Psoas muscle (tissue), 8 donors: ENCODE measurements at regions of chr18 and their contacts with region 1.

Region 1: GRCh38 chr18:24878289-24878688 is 417.9 kb downstream of the HRH4 start:
- DNase-seq: no peak
- ATAC-seq: peak in 3 of 4 donors; percentile 62 to 80 (median 68)
- H3K4me3 ChIP-seq: no peak overlapping the region
- H3K27ac ChIP-seq: no peak overlapping the region
- H3K4me1 ChIP-seq: no peaks in the 10 kb centered on the region
- H3K27me3 ChIP-seq: no peaks in the 10 kb centered on the region
- CTCF ChIP-seq: peak; percentile 72

Region 2: GRCh38 chr18:25062720-25063119 is 184.4 kb after region 1 on chr18:
- intact Hi-C with region 1: loop called (anchors 5 to 10 kb)
- DNase-seq: no peak
- ATAC-seq: peak in 1 of 4 donors; percentile 58
- H3K4me3 ChIP-seq: no peak overlapping the region
- H3K27ac ChIP-seq: no peak overlapping the region
- H3K4me1 ChIP-seq: no peaks in the 10 kb centered on the region
- H3K27me3 ChIP-seq: no peaks in the 10 kb centered on the region
- CTCF ChIP-seq: no peak

Region 3: GRCh38 chr18:25669741-25670140 is 791.5 kb after region 1 on chr18:
- intact Hi-C with region 1: loop called (anchors 2 to 10 kb)
- DNase-seq: no peak
- ATAC-seq: no peak
- H3K4me3 ChIP-seq: no peak overlapping the region
- H3K27ac ChIP-seq: no peak overlapping the region
- H3K4me1 ChIP-seq: no peaks in the 10 kb centered on the region
- H3K27me3 ChIP-seq: no peaks in the 10 kb centered on the region
- CTCF ChIP-seq: peak; percentile 18

Region 4: GRCh38 chr18:25832001-25832604 is 953.8 kb after region 1 on chr18:
- intact Hi-C with region 1: loop called (anchors 1 to 5 kb)
- DNase-seq: peak; percentile 61 to 71
- ATAC-seq: peak; percentile 86 to 93 (median 87)
- H3K4me3 ChIP-seq: no peak overlapping the region
- H3K27ac ChIP-seq: no peak overlapping the region
- H3K4me1 ChIP-seq: no peaks in the 10 kb centered on the region
- H3K27me3 ChIP-seq: no peaks in the 10 kb centered on the region
- CTCF ChIP-seq: peak; percentile 75

Region 5: GRCh38 chr18:25896178-25896780 is 1018.0 kb after region 1 on chr18:
- intact Hi-C with region 1: loop called (anchors 5 kb)
- DNase-seq: no peak
- ATAC-seq: peak; percentile 57 to 78 (median 62)
- H3K4me3 ChIP-seq: no peak overlapping the region
- H3K27ac ChIP-seq: no peak overlapping the region
- H3K4me1 ChIP-seq: no peaks in the 10 kb centered on the region
- H3K27me3 ChIP-seq: no peaks in the 10 kb centered on the region
- CTCF ChIP-seq: peak; percentile 83